GM12878 (cell line): ENCODE measurements at regions of chr12 and their contacts with region 1.

Region 1: DNA sequence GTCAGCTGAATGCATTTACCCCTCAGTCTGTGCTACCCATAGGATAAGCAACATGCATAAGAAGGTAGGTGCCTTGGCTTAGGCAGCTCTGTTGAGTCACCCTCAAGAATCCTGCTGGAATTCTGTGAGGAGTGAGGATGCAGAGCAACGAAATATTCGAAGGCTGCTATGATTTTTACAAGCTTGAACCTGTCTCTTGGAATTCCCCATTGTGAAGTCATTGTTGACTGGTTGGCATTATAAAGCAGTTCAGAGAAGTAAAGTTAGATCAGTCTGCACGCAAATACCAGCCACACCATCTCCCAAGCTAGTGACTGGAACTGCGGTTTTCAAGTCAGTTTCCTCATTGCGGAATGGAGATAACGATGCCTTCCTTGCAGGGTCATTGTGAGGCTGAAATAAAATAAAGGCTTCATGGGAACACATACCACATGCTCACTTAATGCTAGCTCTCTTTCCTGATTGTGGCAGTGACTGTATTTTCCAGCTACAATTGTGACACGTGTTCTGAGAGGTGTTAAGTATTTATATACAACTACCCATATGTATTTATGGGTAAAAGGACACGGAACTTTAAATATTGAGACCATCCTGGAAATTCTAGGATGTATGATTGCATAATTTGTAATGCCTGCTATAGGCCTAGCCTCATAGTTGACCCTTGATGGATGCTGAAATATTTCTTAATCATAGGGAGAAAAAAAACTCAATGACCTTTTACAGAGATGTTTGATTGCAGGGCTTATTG is 96.7 kb downstream of the ETV6 start:
- DNase-seq: peak; percentile 93
- ATAC-seq: peak; percentile 57
- H3K4me3 ChIP-seq: peak overlapping the region; percentile 17; the same call in 1 of the 2 replicates
- H3K27ac ChIP-seq: peak overlapping the region; percentile 100
- H3K4me1 ChIP-seq: peaks cover 88% of the 10 kb centered on the region
- H3K27me3 ChIP-seq: no peaks in the 10 kb centered on the region
- CTCF ChIP-seq: no peak
- EP300 ChIP-seq: peak; percentile 91 to 94
- POLR2A ChIP-seq: peak; percentile 46; the same call in 1 of the 2 replicates
- RAD21 ChIP-seq: peak; percentile 12; the same call in 1 of the 2 replicates

Region 2: DNA sequence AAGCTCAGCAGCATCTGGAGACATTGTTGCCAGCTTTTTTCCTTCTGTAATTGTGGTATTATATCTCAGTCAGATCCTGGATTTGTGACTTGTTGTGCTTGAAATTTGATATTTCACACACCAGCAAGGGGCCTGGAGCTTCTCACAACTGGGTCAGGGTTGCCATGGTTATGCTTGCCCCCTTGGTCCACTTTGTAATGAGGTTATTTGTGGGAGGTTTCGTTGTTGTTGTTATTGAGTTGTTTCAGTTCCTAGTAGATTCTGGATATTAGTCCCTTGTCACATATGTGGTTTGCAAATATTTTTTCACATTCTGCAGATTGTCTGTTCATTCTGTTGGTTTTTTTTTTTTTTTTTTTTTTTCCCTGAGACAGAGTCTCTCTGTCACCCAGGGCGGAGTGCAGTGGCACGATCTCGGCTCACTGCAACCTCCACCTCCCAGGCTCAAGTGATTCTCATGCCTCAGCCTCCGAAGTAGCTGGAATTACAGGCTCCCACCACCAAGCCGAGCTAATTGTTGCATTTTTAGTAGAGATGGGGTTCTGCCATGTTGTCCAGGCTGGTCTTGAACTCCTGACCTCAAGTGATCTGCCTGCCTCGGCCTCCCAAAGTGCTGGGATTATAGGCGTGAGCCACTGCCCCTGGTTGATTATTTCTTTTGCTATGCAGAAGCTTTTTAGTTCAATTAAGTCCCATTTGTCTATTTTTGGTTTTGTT is 177.3 kb before region 1 on chr12:
- CTCF ChIA-PET with region 1: interaction called, 3 read pairs
- POLR2A ChIA-PET with region 1: interaction called, 3 read pairs
- RAD21 ChIA-PET with region 1: interaction called, 4 read pairs
- SMC1A ChIA-PET with region 1: interaction called, 6 read pairs
- in situ Hi-C with region 1: no loop called
- intact Hi-C with region 1: loop called (anchors 2 kb)
- DNase-seq: peak; percentile 96
- ATAC-seq: peak; percentile 77
- H3K4me3 ChIP-seq: peak overlapping the region; percentile 48
- H3K27ac ChIP-seq: peak overlapping the region; percentile 98
- H3K4me1 ChIP-seq: peaks cover 46% of the 10 kb centered on the region
- H3K27me3 ChIP-seq: no peaks in the 10 kb centered on the region
- CTCF ChIP-seq: no peak
- EP300 ChIP-seq: peak; percentile 99
- POLR2A ChIP-seq: no peak
- RAD21 ChIP-seq: no peak

Region 3: DNA sequence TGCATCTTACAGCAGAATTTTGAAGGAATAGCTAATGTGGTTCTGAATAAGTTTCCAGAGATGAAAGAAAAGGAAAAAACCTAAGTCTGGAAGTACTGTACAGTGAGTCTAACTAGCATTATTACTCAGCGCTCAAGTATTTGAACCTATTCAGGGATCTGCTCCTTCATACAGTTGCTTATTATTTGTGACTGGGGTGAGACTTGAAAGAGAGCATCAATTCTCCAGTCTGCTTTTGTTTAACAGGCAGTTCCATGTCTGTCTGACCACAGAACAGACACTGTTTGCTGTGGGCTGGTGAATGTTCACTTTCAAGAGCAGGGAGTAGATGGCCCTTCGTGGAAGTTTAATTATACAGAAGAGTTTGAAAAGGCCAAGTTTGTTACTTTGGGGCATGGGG is 87.4 kb before region 1 on chr12:
- CTCF ChIA-PET with region 1: no interaction called
- POLR2A ChIA-PET with region 1: interaction called, 8 read pairs
- RAD21 ChIA-PET with region 1: interaction called, 12 read pairs
- SMC1A ChIA-PET with region 1: interaction called, 26 read pairs
- in situ Hi-C with region 1: no loop called
- intact Hi-C with region 1: loop called (anchors 1 kb)
- DNase-seq: no peak
- ATAC-seq: no peak
- H3K4me3 ChIP-seq: no peak overlapping the region
- H3K27ac ChIP-seq: no peak overlapping the region
- H3K4me1 ChIP-seq: peaks cover 23% of the 10 kb centered on the region
- H3K27me3 ChIP-seq: no peaks in the 10 kb centered on the region
- CTCF ChIP-seq: no peak
- EP300 ChIP-seq: no peak
- POLR2A ChIP-seq: no peak
- RAD21 ChIP-seq: no peak

Region 4: GRCh38 chr12:11695321-11695720 is 50.9 kb before region 1 on chr12:
- CTCF ChIA-PET with region 1: no interaction called
- POLR2A ChIA-PET with region 1: no interaction called
- RAD21 ChIA-PET with region 1: no interaction called
- SMC1A ChIA-PET with region 1: no interaction called
- in situ Hi-C with region 1: no loop called
- intact Hi-C with region 1: no loop called
- DNase-seq: no peak
- ATAC-seq: no peak
- H3K4me3 ChIP-seq: no peak overlapping the region
- H3K27ac ChIP-seq: no peak overlapping the region
- H3K4me1 ChIP-seq: peaks cover 2% of the 10 kb centered on the region; the same call in 1 of the 2 replicates
- H3K27me3 ChIP-seq: no peaks in the 10 kb centered on the region
- CTCF ChIP-seq: no peak
- EP300 ChIP-seq: no peak
- POLR2A ChIP-seq: no peak
- RAD21 ChIP-seq: no peak

Region 5: DNA sequence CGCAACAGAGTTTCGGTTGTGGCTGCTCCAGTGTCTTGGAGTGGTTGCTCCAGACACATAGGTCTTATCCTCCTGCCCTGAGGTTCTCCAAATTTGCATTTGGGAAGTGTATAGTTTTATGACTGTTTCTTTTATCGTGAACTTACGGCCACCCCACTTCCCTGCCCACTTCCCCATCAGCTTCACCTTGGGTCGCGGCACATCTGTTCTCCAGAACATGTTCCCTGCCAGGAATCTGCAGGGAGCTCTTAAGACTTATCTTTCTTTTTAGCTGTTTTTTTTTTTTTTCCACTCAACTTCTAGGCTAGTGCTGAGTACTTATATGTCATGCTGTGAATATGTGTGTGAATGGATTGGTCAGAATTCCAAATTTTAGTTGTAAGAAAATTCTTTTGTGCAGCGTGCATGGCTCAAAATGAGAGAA is 21.3 kb before region 1 on chr12:
- CTCF ChIA-PET with region 1: interaction called, 47 read pairs
- POLR2A ChIA-PET with region 1: interaction called, 44 read pairs
- RAD21 ChIA-PET with region 1: interaction called, 497 read pairs
- SMC1A ChIA-PET with region 1: interaction called, 433 read pairs
- in situ Hi-C with region 1: no loop called
- intact Hi-C with region 1: loop called (anchors 2 kb)
- DNase-seq: no peak
- ATAC-seq: no peak
- H3K4me3 ChIP-seq: peak overlapping the region; percentile 8; the same call in 1 of the 2 replicates
- H3K27ac ChIP-seq: peak overlapping the region; percentile 89
- H3K4me1 ChIP-seq: peaks cover 98% of the 10 kb centered on the region
- H3K27me3 ChIP-seq: no peaks in the 10 kb centered on the region
- CTCF ChIP-seq: no peak
- EP300 ChIP-seq: no peak
- POLR2A ChIP-seq: no peak
- RAD21 ChIP-seq: no peak

Region 6: DNA sequence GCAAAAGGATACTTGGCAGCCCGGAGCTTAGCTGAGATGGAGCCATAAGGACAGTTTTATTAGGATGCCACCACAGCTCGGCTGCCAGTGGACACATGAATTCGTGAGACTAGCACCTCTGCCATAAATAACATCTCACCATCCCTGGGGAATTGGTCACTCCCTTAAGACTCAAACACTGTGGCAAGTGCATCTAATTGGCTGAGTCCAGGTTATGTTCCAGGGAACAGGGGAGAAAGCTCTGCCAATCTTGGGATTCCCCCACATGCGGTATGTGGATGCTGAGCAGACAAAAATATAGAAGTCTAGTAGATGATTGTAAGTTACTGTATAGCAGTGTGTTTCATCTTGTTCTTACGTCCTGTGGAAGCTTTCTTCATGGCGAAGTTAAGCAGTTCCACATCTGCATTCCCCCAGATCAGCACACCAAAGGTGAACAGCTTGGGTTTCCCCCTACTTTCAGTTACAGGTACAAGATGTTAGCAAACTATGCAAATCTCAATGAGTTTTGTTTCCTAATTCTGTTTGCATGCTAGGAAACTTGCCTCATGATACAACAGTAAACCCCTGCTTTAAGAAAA is 34.4 kb after region 1 on chr12:
- CTCF ChIA-PET with region 1: interaction called, 6 read pairs
- POLR2A ChIA-PET with region 1: interaction called, 25 read pairs
- RAD21 ChIA-PET with region 1: interaction called, 28 read pairs
- SMC1A ChIA-PET with region 1: interaction called, 1,116 read pairs
- in situ Hi-C with region 1: no loop called
- intact Hi-C with region 1: loop called (anchors 2 kb)
- DNase-seq: peak; percentile 94
- ATAC-seq: peak; percentile 79
- H3K4me3 ChIP-seq: peak overlapping the region; percentile 13; the same call in 1 of the 2 replicates
- H3K27ac ChIP-seq: peak overlapping the region; percentile 95
- H3K4me1 ChIP-seq: peaks cover 67% of the 10 kb centered on the region
- H3K27me3 ChIP-seq: no peaks in the 10 kb centered on the region
- CTCF ChIP-seq: no peak
- EP300 ChIP-seq: peak; percentile 67 to 91; a peak in 2 of 4 replicates
- POLR2A ChIP-seq: peak; percentile 48; the same call in 1 of the 2 replicates
- RAD21 ChIP-seq: 0 out of 2 replicates have a peak, but pooled peaks have one; percentile 3

Region 7: DNA sequence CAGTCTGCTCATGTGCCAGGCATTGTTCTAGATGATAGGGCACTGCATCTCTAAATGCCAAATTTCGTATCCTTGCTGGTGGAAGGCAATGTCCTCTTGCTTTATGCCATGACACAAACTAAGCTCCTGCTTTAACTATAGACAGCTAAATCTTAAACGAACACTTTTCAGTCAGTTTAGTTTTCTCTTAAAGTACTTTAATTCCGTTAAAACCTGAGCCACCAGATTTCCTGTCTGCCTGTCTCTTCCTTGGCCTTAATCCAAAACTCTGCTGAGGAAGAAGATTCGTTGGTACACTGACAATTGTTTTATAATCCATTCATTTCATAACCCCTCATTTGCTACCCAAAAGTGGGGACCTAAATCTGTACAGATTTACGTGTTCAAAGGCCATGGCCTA is 130.1 kb after region 1 on chr12:
- CTCF ChIA-PET with region 1: no interaction called
- POLR2A ChIA-PET with region 1: no interaction called
- RAD21 ChIA-PET with region 1: no interaction called
- SMC1A ChIA-PET with region 1: no interaction called
- in situ Hi-C with region 1: no loop called
- intact Hi-C with region 1: no loop called
- DNase-seq: no peak
- ATAC-seq: no peak
- H3K4me3 ChIP-seq: no peak overlapping the region
- H3K27ac ChIP-seq: 0 out of 2 replicates have a peak overlapping the region, but pooled peaks have one; percentile 49
- H3K4me1 ChIP-seq: peaks cover 14% of the 10 kb centered on the region
- H3K27me3 ChIP-seq: no peaks in the 10 kb centered on the region
- CTCF ChIP-seq: no peak
- EP300 ChIP-seq: no peak
- POLR2A ChIP-seq: no peak
- RAD21 ChIP-seq: no peak

Region 8: GRCh38 chr12:12008931-12009611 is 262.9 kb after region 1 on chr12:
- CTCF ChIA-PET with region 1: interaction called, 4 read pairs
- POLR2A ChIA-PET with region 1: no interaction called
- RAD21 ChIA-PET with region 1: interaction called, 9 read pairs
- SMC1A ChIA-PET with region 1: interaction called, 10 read pairs
- in situ Hi-C with region 1: no loop called
- intact Hi-C with region 1: loop called (anchors 5 kb)
- DNase-seq: peak; percentile 86
- ATAC-seq: peak; percentile 63
- H3K4me3 ChIP-seq: no peak overlapping the region
- H3K27ac ChIP-seq: peak overlapping the region; percentile 90
- H3K4me1 ChIP-seq: peaks cover 57% of the 10 kb centered on the region
- H3K27me3 ChIP-seq: no peaks in the 10 kb centered on the region
- CTCF ChIP-seq: peak; percentile 33 to 45 (median 41); a peak in 5 of 6 replicates
- EP300 ChIP-seq: no peak; a peak in 1 of 4 replicates
- POLR2A ChIP-seq: no peak
- RAD21 ChIP-seq: peak; percentile 71

Region 9: GRCh38 chr12:12365931-12366431 is 619.8 kb after region 1 on chr12:
- CTCF ChIA-PET with region 1: no interaction called
- POLR2A ChIA-PET with region 1: no interaction called
- RAD21 ChIA-PET with region 1: no interaction called
- SMC1A ChIA-PET with region 1: no interaction called
- in situ Hi-C with region 1: no loop called
- intact Hi-C with region 1: no loop called
- DNase-seq: no peak
- ATAC-seq: peak; percentile 66
- H3K4me3 ChIP-seq: no peak overlapping the region
- H3K27ac ChIP-seq: no peak overlapping the region
- H3K4me1 ChIP-seq: no peaks in the 10 kb centered on the region
- H3K27me3 ChIP-seq: no peaks in the 10 kb centered on the region
- CTCF ChIP-seq: no peak
- EP300 ChIP-seq: no peak
- POLR2A ChIP-seq: no peak
- RAD21 ChIP-seq: no peak